ENCODE measurements at regions of chr4 and their contacts with region 1.

Region 1: DNA sequence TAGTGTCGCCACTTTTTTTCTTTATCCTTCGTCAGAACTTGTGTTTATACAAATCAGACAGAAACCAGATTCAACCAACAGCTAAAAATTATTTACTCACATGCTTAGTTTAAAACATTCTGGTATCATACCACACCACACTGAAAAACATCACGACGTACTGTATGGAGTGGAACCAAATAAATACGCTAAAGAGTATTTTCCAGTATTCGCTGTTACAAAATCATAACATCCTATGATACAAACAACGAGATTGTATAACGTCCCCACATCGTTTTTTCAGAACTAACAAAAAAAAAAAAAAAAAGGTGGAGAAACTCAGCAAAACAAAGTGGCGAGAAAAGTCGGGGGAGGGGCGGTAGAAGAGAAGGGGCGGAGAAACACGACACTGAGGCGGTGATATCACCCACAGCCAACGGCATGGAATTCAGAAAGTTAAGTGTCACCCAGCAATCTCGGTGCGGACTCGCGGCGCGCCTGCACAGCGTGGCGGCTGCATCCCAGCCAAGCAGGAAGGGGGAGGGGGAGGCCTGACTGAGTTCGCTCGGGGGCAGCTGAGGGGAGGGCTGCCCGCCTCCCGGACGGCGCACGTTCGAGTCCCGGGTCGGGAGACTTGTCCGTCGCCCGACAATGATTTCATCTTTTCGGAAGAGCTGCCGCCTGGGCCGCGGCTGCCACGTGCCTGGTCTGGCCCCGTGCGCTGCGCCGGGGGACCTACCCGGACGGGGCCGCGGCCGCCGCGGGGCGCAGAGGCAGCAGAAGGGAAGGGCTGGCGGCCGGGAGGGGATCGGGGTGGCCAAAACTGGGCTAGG is 920 bp downstream of the SETD7 start:
- DNase-seq: peak; percentile 88 to 92
- H3K4me3 ChIP-seq: peak overlapping the region; percentile 81 to 94 (median 81)
- H3K27ac ChIP-seq: peak overlapping the region; percentile 95 to 96 (median 95)
- H3K4me1 ChIP-seq: peaks cover 27 to 53% of the 10 kb centered on the region in 2 donors
- H3K27me3 ChIP-seq: no peaks in the 10 kb centered on the region
- CTCF ChIP-seq: no peak
- POLR2A ChIP-seq: peak in 1 of 2 donors; percentile 89

Region 2: DNA sequence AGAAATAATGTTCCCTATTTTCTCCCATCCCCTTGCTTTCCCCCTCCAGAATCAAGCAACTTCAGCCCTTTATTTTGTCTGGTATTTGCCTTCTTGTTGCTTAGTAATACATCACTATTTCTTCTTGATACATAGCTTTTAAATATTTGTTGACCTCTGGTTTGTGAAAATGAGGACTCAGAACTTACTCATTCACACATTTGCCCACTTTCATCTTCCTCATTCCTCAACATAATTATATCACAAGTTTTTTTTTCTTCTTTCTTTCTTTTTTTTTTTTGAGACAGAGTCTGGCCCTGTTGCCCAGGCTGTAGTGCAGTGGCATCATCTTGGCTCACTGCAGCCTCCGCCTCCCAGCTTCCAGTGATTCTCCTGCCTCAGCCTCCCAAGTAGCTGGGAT is 223.9 kb before region 1 on chr4:
- intact Hi-C with region 1: no loop called
- DNase-seq: no peak
- H3K4me3 ChIP-seq: no peak overlapping the region
- H3K27ac ChIP-seq: no peak overlapping the region
- H3K4me1 ChIP-seq: no peaks in the 10 kb centered on the region
- H3K27me3 ChIP-seq: no peaks in the 10 kb centered on the region
- CTCF ChIP-seq: no peak
- POLR2A ChIP-seq: no peak

Region 3: DNA sequence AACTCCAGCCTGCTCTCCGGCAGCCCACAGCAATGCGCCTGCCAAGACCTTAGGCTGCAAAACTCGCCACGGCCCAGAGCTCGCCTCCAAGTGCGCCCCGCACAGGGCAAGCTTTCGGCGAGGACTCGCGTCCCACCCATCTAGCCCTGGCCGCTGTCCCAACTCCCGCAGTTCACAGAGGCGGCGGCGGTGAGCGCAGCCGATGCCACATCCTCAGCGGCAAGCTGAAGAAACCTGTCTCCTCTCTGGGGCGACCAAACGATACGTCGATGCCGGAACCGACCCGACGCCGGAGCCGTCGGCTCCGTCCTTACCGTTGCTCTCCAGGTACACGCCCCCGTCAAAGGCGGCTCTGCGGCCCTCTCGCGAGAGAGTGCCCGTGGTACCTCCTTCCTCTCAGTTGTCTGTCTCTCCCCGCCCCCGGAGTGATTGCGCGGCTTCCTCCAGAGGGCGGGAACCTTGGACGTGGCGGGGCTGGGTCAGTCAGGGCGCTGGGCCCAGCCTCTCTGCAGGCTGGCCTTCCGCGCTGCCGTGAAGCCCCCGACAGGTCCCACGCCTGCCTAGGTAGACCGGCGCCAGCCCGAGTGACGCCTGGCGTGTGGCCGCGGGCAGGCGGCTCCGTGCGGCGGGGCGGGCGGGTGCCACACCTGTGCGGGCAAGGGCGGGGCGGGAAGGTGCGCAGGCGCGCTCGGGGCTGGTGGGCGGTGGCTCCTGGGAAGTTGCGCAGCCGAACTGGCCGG is 101.6 kb before region 1 on chr4:
- intact Hi-C with region 1: loop called (anchors 10 kb)
- DNase-seq: peak; percentile 98 to 99
- H3K4me3 ChIP-seq: peak overlapping the region; percentile 33 to 86 (median 67)
- H3K27ac ChIP-seq: peak overlapping the region; percentile 91 to 98 (median 93)
- H3K4me1 ChIP-seq: peaks cover 35 to 44% of the 10 kb centered on the region in 2 donors
- H3K27me3 ChIP-seq: no peaks in the 10 kb centered on the region
- CTCF ChIP-seq: peak in 1 of 6 experiments; percentile 15
- POLR2A ChIP-seq: peak in 1 of 2 donors; percentile 92

Region 4: GRCh38 chr4:139509727-139510410 is 45.2 kb before region 1 on chr4:
- intact Hi-C with region 1: no loop called
- DNase-seq: peak; percentile 19 to 23
- H3K4me3 ChIP-seq: no peak overlapping the region
- H3K27ac ChIP-seq: no peak overlapping the region
- H3K4me1 ChIP-seq: no peaks in the 10 kb centered on the region
- H3K27me3 ChIP-seq: no peaks in the 10 kb centered on the region
- CTCF ChIP-seq: peak in 2 of 6 experiments; percentile 31 to 40
- POLR2A ChIP-seq: no peak

Region 5: GRCh38 chr4:139609647-139610046 is 54.5 kb after region 1 on chr4:
- intact Hi-C with region 1: no loop called
- DNase-seq: no peak
- H3K4me3 ChIP-seq: no peak overlapping the region
- H3K27ac ChIP-seq: no peak overlapping the region
- H3K4me1 ChIP-seq: no peaks in the 10 kb centered on the region
- H3K27me3 ChIP-seq: no peaks in the 10 kb centered on the region
- CTCF ChIP-seq: no peak
- POLR2A ChIP-seq: no peak